Activated CD4-positive, alpha-beta T cell treated with anti-CD3 and anti-CD28 coated beads for 36 hours (primary cell): ENCODE measurements at regions of chr6 and their contacts with region 1.

Region 1: GRCh38 chr6:797479-798077 is 104.6 kb upstream of the EXOC2 start:
- DNase-seq: peak; percentile 68
- ATAC-seq: no peak
- H3K4me3 Mint-ChIP-seq: no peak overlapping the region
- H3K27ac Mint-ChIP-seq: no peak overlapping the region
- H3K4me1 Mint-ChIP-seq: no peaks in the 10 kb centered on the region
- H3K27me3 Mint-ChIP-seq: peaks cover 46% of the 10 kb centered on the region

Region 2: GRCh38 chr6:786946-787763 is 10.4 kb before region 1 on chr6:
- CTCF ChIA-PET with region 1: interaction called, 11 read pairs
- POLR2A ChIA-PET with region 1: no interaction called
- intact Hi-C with region 1: no loop called
- DNase-seq: peak; percentile 36
- ATAC-seq: peak; percentile 53
- H3K4me3 Mint-ChIP-seq: no peak overlapping the region
- H3K27ac Mint-ChIP-seq: peak overlapping the region; percentile 40
- H3K4me1 Mint-ChIP-seq: peaks cover 20% of the 10 kb centered on the region
- H3K27me3 Mint-ChIP-seq: peaks cover 12% of the 10 kb centered on the region

Region 3: DNA sequence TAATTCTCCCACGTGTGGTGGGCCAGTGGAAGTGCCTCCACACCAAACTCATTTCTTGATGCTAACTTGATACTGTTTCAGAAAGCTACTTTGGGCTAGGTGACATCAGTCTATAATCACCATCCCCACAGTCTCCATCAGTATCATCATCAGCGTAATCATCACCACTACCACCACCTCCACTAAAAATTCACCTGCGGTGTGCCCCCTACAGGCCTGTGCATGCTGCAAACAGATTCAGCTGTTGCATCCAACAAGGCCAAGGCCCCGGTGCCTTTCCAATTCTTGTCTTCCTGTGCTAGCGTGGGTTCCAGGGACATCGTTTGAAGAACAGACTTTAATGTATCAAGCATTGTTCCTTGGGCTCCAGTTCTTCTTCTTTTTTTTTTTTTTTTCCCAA is 96.7 kb after region 1 on chr6:
- CTCF ChIA-PET with region 1: interaction called, 3 read pairs
- POLR2A ChIA-PET with region 1: no interaction called
- intact Hi-C with region 1: loop called in 1 of 2 experiments (anchors 2 kb)
- DNase-seq: peak; percentile 45
- ATAC-seq: no peak
- H3K4me3 Mint-ChIP-seq: no peak overlapping the region
- H3K27ac Mint-ChIP-seq: no peak overlapping the region
- H3K4me1 Mint-ChIP-seq: no peaks in the 10 kb centered on the region
- H3K27me3 Mint-ChIP-seq: peaks cover 13% of the 10 kb centered on the region

Region 4: GRCh38 chr6:1381481-1382330 is 584.1 kb after region 1 on chr6:
- CTCF ChIA-PET with region 1: interaction called, 4 read pairs
- POLR2A ChIA-PET with region 1: no interaction called
- intact Hi-C with region 1: loop called (anchors 1 to 5 kb)
- DNase-seq: peak; percentile 77
- ATAC-seq: peak; percentile 75
- H3K4me3 Mint-ChIP-seq: peak overlapping the region; percentile 10
- H3K27ac Mint-ChIP-seq: no peak overlapping the region
- H3K4me1 Mint-ChIP-seq: peaks cover 38% of the 10 kb centered on the region
- H3K27me3 Mint-ChIP-seq: peaks cover 68% of the 10 kb centered on the region

Region 5: DNA sequence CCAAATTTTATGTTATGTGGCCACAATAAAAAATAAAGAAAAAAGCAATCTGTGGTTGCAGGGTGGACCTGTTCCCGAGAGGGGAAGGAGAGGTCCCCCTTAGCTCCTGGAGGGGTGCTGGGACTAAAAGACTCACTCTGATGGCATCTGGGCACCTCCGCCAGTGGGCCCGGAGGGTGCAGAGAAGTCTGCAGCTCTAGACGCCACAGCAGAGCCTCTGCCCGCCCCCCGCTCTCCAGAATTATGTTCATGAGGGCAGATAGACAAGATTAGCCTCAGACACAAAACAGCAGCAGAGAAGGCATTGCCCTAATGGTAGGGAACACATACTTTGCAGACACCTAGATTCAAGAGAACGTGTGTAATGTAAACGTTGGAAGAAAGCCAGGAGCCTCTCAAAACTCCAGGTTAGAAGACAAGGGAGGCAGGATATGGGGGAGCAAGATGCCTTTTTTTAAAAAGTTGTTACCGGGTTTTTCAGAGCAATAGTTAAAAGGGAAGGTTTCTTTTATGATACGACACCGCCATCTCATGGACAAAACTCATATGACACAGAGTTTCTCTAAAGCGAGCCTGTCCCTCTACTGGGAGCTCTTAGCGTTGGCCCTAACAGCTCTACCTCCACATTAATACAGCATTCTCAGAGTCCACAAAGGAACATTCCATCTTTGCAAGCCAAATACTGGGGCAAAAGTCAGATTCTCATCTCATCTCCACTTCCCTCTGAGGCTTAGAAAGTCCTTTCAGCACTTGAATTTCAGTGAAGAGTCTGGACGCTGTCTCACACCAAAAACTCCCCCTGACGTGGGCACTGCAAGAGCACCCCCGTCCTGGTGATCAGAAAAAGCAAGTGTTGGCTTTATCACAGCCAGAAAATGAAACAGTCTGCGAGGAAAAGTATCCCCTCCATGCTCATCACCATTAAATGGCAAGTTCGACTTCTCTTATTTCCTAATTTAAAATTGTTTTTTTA is 639.0 kb after region 1 on chr6:
- CTCF ChIA-PET with region 1: no interaction called
- POLR2A ChIA-PET with region 1: no interaction called
- intact Hi-C with region 1: loop called in 1 of 2 experiments (anchors 1 kb)
- DNase-seq: peak; percentile 61
- ATAC-seq: peak; percentile 78
- H3K4me3 Mint-ChIP-seq: no peak overlapping the region
- H3K27ac Mint-ChIP-seq: no peak overlapping the region
- H3K4me1 Mint-ChIP-seq: peaks cover 4% of the 10 kb centered on the region
- H3K27me3 Mint-ChIP-seq: peaks cover 34% of the 10 kb centered on the region